ENCODE measurements at regions of chr17 and their contacts with region 1.

Region 1: GRCh38 chr17:38717139-38717745 is 12.2 kb downstream of the MLLT6 start:
- DNase-seq: no peak
- H3K4me3 ChIP-seq: no peak overlapping the region
- H3K27ac ChIP-seq: no peak overlapping the region
- H3K4me1 ChIP-seq: peaks cover 14 to 41% (median 25%) of the 10 kb centered on the region in 4 experiments
- H3K27me3 ChIP-seq: peaks cover 0 to 11% (median 7%) of the 10 kb centered on the region in 4 experiments; a peak in 6 of 7 replicates
- CTCF ChIP-seq: no peak
- EP300 ChIP-seq: no peak
- POLR2A ChIP-seq: no peak
- RAD21 ChIP-seq: no peak

Region 2: GRCh38 chr17:38539386-38539785 is 177.9 kb before region 1 on chr17:
- CTCF ChIA-PET with region 1: no interaction called
- POLR2A ChIA-PET with region 1: no interaction called
- DNase-seq: no peak
- H3K4me3 ChIP-seq: no peak overlapping the region
- H3K27ac ChIP-seq: no peak overlapping the region
- H3K4me1 ChIP-seq: peaks cover 0 to 2% (median under 1%) of the 10 kb centered on the region in 4 experiments; a peak in 2 of 7 replicates
- H3K27me3 ChIP-seq: peaks cover 0 to 4% (median 1%) of the 10 kb centered on the region in 4 experiments; a peak in 1 of 7 replicates
- CTCF ChIP-seq: no peak
- EP300 ChIP-seq: no peak
- POLR2A ChIP-seq: no peak
- RAD21 ChIP-seq: no peak

Region 3: GRCh38 chr17:38704645-38705522 is 12.4 kb before region 1 on chr17 and contains the start of gene MLLT6:
- CTCF ChIA-PET with region 1: interaction called, 15 read pairs
- POLR2A ChIA-PET with region 1: interaction called, 38 read pairs
- DNase-seq: no peak
- H3K4me3 ChIP-seq: peak within 1 kb of the TSS; percentile 46 to 76 (median 60)
- H3K27ac ChIP-seq: no peak within 1 kb of the TSS
- H3K4me1 ChIP-seq: peaks cover 15 to 48% (median 32%) of the 10 kb centered on the region in 4 experiments
- H3K27me3 ChIP-seq: peaks cover 31 to 80% (median 65%) of the 10 kb centered on the region in 4 experiments
- CTCF ChIP-seq: no peak
- EP300 ChIP-seq: no peak
- POLR2A ChIP-seq: no peak
- RAD21 ChIP-seq: no peak; a peak in 1 of 4 replicates
- total RNA-seq, gene MLLT6: 7.7 and 8.0 TPM in 2 replicates

Measured in H1 (cell line).